ENCODE measurements at regions of chr3 and their contacts with region 1.

Region 1: DNA sequence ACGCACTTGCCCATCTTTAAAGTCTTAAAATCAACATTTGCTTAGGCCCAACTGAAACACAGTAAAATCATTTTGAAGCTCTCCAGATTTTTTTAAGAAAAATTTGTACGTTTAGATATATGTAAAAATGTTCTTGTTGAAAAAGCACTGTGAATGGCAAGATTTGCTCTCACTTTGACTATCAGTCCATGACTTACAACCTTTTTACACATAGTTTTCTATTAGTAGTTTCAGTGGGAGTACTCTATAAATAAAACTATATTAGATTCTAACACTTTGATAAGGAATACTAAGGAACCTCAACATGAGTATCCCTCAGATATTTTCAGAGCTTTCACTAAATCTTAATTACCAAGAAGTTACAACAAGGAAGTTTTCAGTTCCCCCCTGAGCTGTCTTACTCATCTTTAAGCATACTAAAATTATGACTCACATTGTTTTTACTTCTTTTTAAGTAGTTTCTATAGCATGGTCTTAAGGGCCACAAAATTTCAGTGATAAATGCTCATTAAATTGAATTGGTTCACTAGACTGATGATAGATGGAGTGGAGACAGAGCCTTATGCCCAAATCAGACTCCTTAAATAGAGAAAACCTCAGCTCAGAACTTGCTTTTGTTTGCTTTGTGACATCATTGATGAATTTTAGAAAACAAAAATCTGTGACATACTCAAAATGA is 31.6 kb upstream of the RAP2B start:
- DNase-seq: peak; percentile 82
- ATAC-seq: peak; percentile 91
- H3K4me3 ChIP-seq: no peak overlapping the region
- H3K27ac ChIP-seq: peak overlapping the region; percentile 49; the same call in 1 of the 2 replicates
- H3K4me1 ChIP-seq: no peaks in the 10 kb centered on the region
- H3K27me3 ChIP-seq: no peaks in the 10 kb centered on the region
- CTCF ChIP-seq: no peak
- POLR2A ChIP-seq: no peak
- RAD21 ChIP-seq: no peak

Region 2: GRCh38 chr3:153080778-153081240 is 49.6 kb before region 1 on chr3:
- CTCF ChIA-PET with region 1: no interaction called
- POLR2A ChIA-PET with region 1: interaction called, 20 read pairs
- dilution Hi-C with region 1: no loop called
- in situ Hi-C with region 1: no loop called
- intact Hi-C with region 1: no loop called
- DNase-seq: no peak
- ATAC-seq: no peak
- H3K4me3 ChIP-seq: no peak overlapping the region
- H3K27ac ChIP-seq: no peak overlapping the region
- H3K4me1 ChIP-seq: no peaks in the 10 kb centered on the region
- H3K27me3 ChIP-seq: no peaks in the 10 kb centered on the region
- CTCF ChIP-seq: no peak
- POLR2A ChIP-seq: no peak
- RAD21 ChIP-seq: no peak

Measured in IMR-90 (cell line).